ENCODE measurements at regions of chr19 and their contacts with region 1.

Region 1: GRCh38 chr19:55632463-55632834 is 8.1 kb upstream of the ZNF784 start:
- DNase-seq: peak; percentile 91
- H3K4me3 ChIP-seq: no peak overlapping the region
- H3K27ac ChIP-seq: no peak overlapping the region
- H3K4me1 ChIP-seq: peaks cover 12% of the 10 kb centered on the region
- H3K27me3 ChIP-seq: no peaks in the 10 kb centered on the region
- CTCF ChIP-seq: peak; percentile 67 to 75
- POLR2A ChIP-seq: no peak

Region 2: DNA sequence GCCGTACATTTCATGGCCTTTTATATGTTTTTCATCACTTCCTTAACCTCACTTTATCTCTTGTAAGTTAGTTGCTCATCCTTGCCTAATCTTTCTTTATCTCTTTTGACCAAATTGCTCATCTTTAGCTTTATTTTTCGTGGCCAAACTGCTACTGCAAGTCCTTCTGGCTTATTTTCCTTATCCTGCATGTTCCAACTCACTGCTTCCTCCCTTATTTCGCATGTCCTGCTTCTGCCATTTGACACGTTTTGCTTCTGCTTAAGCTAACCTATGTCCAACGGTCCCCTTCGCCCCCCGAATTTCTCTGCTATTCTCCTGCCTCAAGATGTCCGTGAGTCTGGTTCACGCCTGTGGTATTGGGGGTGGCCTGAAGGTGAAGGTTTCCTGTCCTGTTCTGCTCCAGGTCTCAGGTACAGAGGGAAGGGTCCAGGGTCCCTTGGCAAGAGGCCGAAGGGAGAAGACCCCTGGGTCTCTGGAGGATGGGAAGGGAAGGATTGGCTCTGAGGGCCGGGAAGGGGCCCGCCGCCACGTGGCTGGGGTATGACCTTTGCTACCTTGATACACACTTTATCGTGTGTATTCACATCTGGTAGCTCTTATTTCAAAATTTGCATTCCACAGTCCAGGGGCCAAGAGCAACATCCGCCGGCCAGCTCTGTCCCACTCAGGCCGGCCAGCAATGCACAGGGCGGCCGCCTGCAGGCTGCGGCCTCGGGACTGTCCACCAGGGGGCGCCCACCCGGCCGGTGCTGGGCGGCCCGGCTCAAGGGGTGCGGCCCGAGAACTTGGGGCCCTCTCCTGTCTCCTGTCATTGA is 165.0 kb before region 1 on chr19:
- CTCF ChIA-PET with region 1: interaction called, 26 read pairs
- POLR2A ChIA-PET with region 1: no interaction called
- dilution Hi-C with region 1: no loop called
- intact Hi-C with region 1: no loop called
- DNase-seq: peak; percentile 38
- H3K4me3 ChIP-seq: no peak overlapping the region
- H3K27ac ChIP-seq: no peak overlapping the region
- H3K4me1 ChIP-seq: no peaks in the 10 kb centered on the region
- H3K27me3 ChIP-seq: no peaks in the 10 kb centered on the region
- CTCF ChIP-seq: peak; percentile 97 to 99
- POLR2A ChIP-seq: no peak

Region 3: DNA sequence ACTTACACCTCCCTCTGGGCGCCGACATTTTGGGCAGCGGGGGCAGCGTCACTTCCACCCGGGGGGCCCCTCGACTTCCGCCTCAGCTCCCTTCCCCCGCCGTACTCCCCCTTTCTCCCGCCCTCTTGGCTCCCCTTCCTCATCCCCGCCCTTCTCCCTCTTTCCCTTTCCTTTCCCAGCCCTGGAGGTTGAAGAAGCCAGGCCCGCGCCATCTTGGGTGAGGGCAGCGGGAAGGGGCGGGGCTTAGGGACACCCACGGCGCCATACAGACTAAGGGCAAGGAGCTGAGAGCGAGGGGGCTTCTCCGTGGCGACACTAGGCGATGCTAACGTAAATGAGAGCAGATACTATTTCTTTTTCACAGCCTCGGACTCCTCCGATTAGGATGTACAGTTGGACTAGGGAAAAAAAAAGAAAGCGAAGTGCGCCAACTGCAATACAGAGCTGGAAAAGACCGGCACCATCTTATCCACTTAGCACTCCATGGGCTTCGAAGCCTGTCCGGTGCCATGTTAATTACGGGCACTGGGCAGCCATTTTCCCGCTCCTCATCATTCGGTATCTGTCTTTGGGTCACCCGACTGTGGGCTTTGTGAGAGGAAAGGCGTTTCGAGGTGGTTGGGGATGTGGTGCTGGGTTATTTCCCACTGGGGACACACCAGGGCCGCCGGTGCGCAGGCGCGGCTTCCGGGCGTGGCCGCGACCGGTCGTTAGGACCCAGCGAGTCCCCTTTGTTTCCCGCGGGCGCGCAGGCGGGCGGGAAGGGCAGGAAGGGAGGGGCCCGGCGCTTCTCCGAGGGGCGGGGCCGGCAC is 32.8 kb before region 1 on chr19 and contains the start of gene FIZ1:
- CTCF ChIA-PET with region 1: interaction called, 8 read pairs
- POLR2A ChIA-PET with region 1: interaction called, 3 read pairs
- dilution Hi-C with region 1: no loop called
- intact Hi-C with region 1: loop called (anchors 1 kb)
- DNase-seq: peak; percentile 99
- H3K4me3 ChIP-seq: peak within 1 kb of the TSS; percentile 78 to 92 (median 89)
- H3K27ac ChIP-seq: peak within 1 kb of the TSS; percentile 98
- H3K4me1 ChIP-seq: peaks cover 12% of the 10 kb centered on the region
- H3K27me3 ChIP-seq: no peaks in the 10 kb centered on the region
- CTCF ChIP-seq: no peak
- POLR2A ChIP-seq: no peak
- total RNA-seq, gene FIZ1: 14.7 and 15.6 TPM in 2 replicates

Region 4: GRCh38 chr19:55643348-55644176 is 11.1 kb after region 1 on chr19 and contains the start of gene ZNF581:
- CTCF ChIA-PET with region 1: interaction called, 14 read pairs
- POLR2A ChIA-PET with region 1: interaction called, 4 read pairs
- dilution Hi-C with region 1: no loop called
- intact Hi-C with region 1: loop called (anchors 1 kb)
- DNase-seq: peak; percentile 68
- H3K4me3 ChIP-seq: peak within 1 kb of the TSS; percentile 60 to 75 (median 61)
- H3K27ac ChIP-seq: no peak within 1 kb of the TSS
- H3K4me1 ChIP-seq: peaks cover 32% of the 10 kb centered on the region
- H3K27me3 ChIP-seq: no peaks in the 10 kb centered on the region
- CTCF ChIP-seq: no peak
- POLR2A ChIP-seq: no peak
- total RNA-seq, gene ZNF581: 27.8 and 31.4 TPM in 2 replicates

Region 5: DNA sequence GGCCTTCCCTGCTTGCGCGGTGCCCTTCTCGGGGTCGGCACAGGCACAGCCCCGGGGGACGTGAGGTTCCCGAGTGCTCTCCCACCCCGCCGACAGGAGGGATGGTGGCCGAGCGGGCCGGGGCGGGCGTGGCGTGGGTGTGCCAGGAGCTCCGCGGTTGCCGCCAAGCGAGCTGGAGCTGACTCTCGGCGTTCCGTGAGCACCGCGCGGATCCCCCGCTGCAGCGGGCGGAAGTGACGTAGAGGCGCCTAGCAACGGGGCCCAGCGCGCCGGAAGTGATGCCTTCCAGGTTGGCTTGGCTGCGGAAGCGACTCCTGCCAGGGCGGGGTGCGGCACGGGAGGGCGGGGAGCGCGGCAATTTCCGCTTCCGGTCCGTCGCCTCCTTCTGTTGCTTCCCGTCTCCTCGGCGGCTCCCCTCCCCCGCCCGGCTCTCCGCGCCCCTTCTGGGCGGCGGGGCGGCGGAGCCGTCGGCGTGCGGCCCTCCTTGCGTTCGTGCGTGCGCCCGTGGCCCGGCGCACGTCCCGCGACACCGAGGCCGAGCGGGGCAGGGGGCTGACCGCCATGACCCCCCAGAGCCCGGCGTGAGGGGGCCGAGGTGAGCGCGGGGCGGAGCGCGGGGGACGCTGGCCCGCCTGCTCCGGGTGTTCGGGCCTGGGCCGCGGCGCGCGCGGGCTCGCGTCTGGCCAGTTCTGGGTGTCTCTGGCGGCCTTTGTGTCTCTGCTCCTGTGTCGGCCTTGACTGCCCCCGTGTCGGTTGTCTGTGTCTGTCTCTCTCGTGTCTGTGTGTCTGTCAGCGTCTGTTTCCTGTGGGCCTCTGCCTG is 42.6 kb after region 1 on chr19 and contains the start of gene EPN1:
- CTCF ChIA-PET with region 1: interaction called, 52 read pairs
- POLR2A ChIA-PET with region 1: no interaction called
- dilution Hi-C with region 1: no loop called
- intact Hi-C with region 1: loop called (anchors 1 kb)
- DNase-seq: peak; percentile 93
- H3K4me3 ChIP-seq: peak within 1 kb of the TSS; percentile 17 to 65 (median 63)
- H3K27ac ChIP-seq: peak within 1 kb of the TSS; percentile 68
- H3K4me1 ChIP-seq: peaks cover 44% of the 10 kb centered on the region
- H3K27me3 ChIP-seq: no peaks in the 10 kb centered on the region
- CTCF ChIP-seq: no peak
- POLR2A ChIP-seq: peak; percentile 68
- total RNA-seq, gene EPN1: 133 and 138 TPM in 2 replicates

Region 6: GRCh38 chr19:56066152-56067023 is 433.9 kb after region 1 on chr19:
- CTCF ChIA-PET with region 1: interaction called, 15 read pairs
- POLR2A ChIA-PET with region 1: no interaction called
- dilution Hi-C with region 1: no loop called
- intact Hi-C with region 1: no loop called
- DNase-seq: peak; percentile 54
- H3K4me3 ChIP-seq: peak overlapping the region in 2 of 3 experiments; percentile 20 to 32
- H3K27ac ChIP-seq: no peak overlapping the region
- H3K4me1 ChIP-seq: peaks cover 7% of the 10 kb centered on the region
- H3K27me3 ChIP-seq: no peaks in the 10 kb centered on the region
- CTCF ChIP-seq: peak; percentile 91 to 95
- POLR2A ChIP-seq: no peak

Measured in endothelial cell of umbilical vein (primary cell).